ENCODE measurements at regions of chr12 and their contacts with region 1.

Region 1: DNA sequence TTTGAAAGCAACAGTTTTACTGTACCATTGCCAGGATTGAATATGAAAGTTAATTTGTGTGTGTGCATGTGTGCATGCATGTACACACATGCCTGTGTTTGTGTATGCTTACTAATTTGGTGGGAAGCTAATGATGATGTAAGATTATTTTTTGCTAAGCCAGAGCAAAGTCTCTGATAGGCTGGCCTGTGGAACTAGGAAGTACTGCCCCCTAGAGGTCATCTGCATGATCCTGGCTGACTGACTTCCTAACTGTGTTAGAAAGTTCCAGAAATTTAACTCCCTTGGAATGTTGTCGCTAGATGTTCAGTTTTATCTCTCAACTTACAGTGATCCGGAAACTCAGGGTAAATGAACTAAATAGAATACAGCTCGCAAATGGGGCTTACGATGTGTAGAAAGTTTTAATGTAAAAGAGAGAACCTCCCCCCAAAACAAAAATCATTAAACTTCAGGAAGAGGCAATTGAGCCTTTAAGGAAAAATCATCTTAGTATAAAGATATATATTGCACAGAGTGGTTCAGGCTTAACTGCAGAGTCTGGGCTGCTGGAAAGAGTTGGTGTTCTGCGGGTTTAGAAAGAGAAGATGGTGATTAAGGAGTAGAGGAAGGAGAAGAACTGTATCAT is 34.3 kb upstream of the SLC38A1 start:
- DNase-seq: no peak
- H3K4me3 ChIP-seq: no peak overlapping the region
- H3K27ac ChIP-seq: no peak overlapping the region
- H3K4me1 ChIP-seq: peaks cover 0 to 5% (median 3%) of the 10 kb centered on the region in 4 donors
- H3K27me3 ChIP-seq: no peaks in the 10 kb centered on the region
- CTCF ChIP-seq: peak; percentile 45 to 60

Region 2: GRCh38 chr12:46124848-46125619 is 178.1 kb before region 1 on chr12:
- intact Hi-C with region 1: loop called (anchors 10 kb)
- DNase-seq: peak in 1 of 2 donors; percentile 45
- H3K4me3 ChIP-seq: peak overlapping the region; percentile 24 to 40
- H3K27ac ChIP-seq: no peak overlapping the region
- H3K4me1 ChIP-seq: no peaks in the 10 kb centered on the region
- H3K27me3 ChIP-seq: no peaks in the 10 kb centered on the region
- CTCF ChIP-seq: peak; percentile 54 to 73